ENCODE measurements at regions of chr19 and their contacts with region 1.

Region 1: DNA sequence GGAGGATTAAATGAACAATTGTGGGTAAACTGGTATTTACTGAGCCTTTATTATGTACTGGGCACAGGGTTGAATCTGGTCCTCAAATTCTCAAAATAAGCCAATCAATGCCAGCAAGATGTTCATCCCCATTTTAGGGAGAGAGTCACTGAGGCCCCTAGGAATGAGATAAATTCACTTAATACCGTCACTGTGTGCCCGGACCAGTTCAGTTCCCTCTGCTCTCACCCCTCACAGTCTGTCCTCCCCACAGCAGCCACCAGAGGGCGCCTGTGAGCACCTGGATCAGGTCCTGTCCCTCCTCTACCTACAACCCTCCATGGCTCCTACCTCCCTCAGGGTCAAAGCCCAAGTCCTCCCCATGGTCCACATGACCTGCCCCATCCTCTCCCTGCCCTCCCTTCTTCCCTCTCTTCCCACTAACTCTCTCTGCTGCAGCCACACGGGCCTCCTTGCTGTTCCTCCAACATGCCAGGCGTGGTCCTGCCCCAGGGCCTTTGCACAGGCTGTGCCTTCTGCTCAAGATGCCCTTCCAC is 42.0 kb upstream of the NFIC start:
- DNase-seq: no peak
- H3K4me3 ChIP-seq: no peak overlapping the region
- H3K27ac ChIP-seq: no peak overlapping the region
- H3K4me1 ChIP-seq: peaks cover 0 to 7% (median 0%) of the 10 kb centered on the region in 3 donors
- H3K27me3 ChIP-seq: peaks cover 0 to 24% (median 0%) of the 10 kb centered on the region in 4 donors
- CTCF ChIP-seq: peak; percentile 11 to 73 (median 66)
- POLR2A ChIP-seq: no peak

Region 2: DNA sequence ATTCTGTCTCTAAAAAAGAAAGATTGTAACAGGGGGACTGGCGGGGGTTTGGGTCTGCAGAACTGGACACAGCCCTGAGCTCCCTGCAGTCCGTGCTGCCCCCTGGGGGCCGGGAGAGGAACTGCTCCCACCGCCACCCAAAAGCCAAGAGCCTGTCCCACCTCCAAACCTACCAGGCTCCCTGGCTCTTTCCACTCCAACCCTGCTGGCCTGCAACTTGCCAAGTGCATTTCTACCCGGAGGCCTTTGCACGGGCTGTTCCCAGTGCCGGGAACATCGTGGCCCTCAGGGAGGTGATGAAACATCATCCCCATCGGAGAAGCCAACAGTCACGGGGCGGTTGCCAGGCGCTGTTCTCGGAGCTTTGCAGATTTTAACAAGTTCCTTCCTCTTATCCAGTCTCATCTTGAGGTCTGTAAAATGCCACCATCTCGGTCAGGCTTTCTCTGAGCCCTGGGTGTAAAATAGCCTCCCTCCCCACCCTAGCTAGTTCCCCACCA is 105.2 kb after region 1 on chr19:
- intact Hi-C with region 1: loop called (anchors 5 kb)
- DNase-seq: no peak
- H3K4me3 ChIP-seq: peak overlapping the region in 1 of 4 donors; percentile 15
- H3K27ac ChIP-seq: peak overlapping the region; percentile 75 to 94 (median 90)
- H3K4me1 ChIP-seq: peaks cover 18 to 81% (median 36%) of the 10 kb centered on the region in 3 donors
- H3K27me3 ChIP-seq: no peaks in the 10 kb centered on the region
- CTCF ChIP-seq: peak; percentile 98 to 100 (median 99)
- POLR2A ChIP-seq: no peak

Region 3: GRCh38 chr19:3479177-3479833 is 154.9 kb after region 1 on chr19:
- intact Hi-C with region 1: loop called (anchors 5 kb)
- DNase-seq: no peak
- H3K4me3 ChIP-seq: no peak overlapping the region
- H3K27ac ChIP-seq: no peak overlapping the region
- H3K4me1 ChIP-seq: peaks cover 0 to 13% (median 7%) of the 10 kb centered on the region in 3 donors
- H3K27me3 ChIP-seq: peaks cover 0 to 75% (median 4%) of the 10 kb centered on the region in 4 donors
- CTCF ChIP-seq: no peak
- POLR2A ChIP-seq: no peak